H1 (cell line): ENCODE measurements at regions of chr17 and their contacts with region 1.

Region 1: GRCh38 chr17:57243171-57243948 is 13.0 kb upstream of the MSI2 start:
- DNase-seq: peak; percentile 47 to 92
- H3K4me3 ChIP-seq: no peak overlapping the region
- H3K27ac ChIP-seq: no peak overlapping the region
- H3K4me1 ChIP-seq: peaks cover 0 to 3% (median under 1%) of the 10 kb centered on the region in 4 experiments; a peak in 2 of 7 replicates
- H3K27me3 ChIP-seq: no peaks in the 10 kb centered on the region
- CTCF ChIP-seq: peak; percentile 100
- EP300 ChIP-seq: no peak
- POLR2A ChIP-seq: no peak
- RAD21 ChIP-seq: peak; percentile 95 to 98

Region 2: DNA sequence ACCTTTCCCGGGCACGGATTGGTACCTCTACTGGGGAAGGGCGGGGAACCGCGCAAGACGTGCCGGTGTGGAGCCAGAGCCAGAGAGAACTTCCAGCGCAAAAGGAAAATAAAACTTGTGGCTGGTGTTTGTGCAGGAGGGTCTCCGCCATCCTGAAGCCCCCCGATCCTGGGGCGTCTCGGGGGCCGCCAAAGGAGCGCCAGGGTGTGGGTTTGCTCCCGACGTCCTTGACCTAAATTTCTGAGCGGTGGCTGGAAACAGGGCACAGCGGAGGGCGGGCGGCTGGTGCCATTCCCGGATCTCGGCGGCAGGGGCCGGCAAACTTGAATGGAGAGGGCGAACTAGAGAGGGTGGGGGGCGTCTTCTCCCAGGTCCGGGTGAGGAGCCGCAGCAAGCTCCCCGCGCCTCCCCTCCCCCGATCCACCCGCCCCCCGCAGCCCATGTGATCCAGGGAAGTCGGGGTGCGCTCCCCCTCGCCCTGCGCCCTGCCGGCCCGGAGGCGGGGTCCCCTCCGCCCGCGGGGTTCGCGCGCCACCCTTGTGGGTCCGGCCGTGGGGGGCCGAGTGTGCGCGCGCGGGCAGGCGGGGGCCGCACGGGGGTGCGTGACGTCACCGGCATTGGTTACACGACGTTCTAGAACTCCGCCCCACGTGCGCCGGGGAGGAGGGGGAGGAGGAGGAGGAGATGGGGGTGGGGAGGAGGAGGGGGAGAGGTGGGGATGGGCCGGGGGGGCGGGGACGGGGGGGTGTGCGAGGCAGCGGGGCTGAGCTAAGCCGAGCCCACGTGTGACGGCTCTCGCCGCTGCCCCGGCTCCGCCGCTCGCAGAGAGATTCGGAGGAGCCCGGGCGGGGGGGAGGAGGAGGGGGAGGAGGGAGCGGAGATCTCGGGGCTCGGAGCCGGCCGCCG is 12.7 kb after region 1 on chr17 and contains the start of gene MSI2:
- CTCF ChIA-PET with region 1: interaction called, 40 read pairs
- POLR2A ChIA-PET with region 1: interaction called, 4 read pairs
- DNase-seq: peak in 1 of 2 experiments; percentile 87
- H3K4me3 ChIP-seq: peak within 1 kb of the TSS; percentile 72 to 94 (median 74)
- H3K27ac ChIP-seq: peak within 1 kb of the TSS; percentile 70; the same call in 1 of the 2 replicates
- H3K4me1 ChIP-seq: peaks cover 4 to 30% (median 6%) of the 10 kb centered on the region in 4 experiments; a peak in 6 of 7 replicates
- H3K27me3 ChIP-seq: peaks cover 2 to 10% (median 8%) of the 10 kb centered on the region in 4 experiments; a peak in 6 of 7 replicates
- CTCF ChIP-seq: peak in 1 of 3 experiments; percentile 10; a peak in 1 of 4 replicates
- EP300 ChIP-seq: no peak
- POLR2A ChIP-seq: no peak
- RAD21 ChIP-seq: peak in 1 of 2 experiments; percentile 8; a peak in 1 of 4 replicates
- total RNA-seq, gene MSI2: 73.1 and 80.6 TPM in 2 replicates

Region 3: GRCh38 chr17:57279432-57279831 is 36.1 kb after region 1 on chr17:
- CTCF ChIA-PET with region 1: interaction called, 20 read pairs
- POLR2A ChIA-PET with region 1: no interaction called
- DNase-seq: no peak
- H3K4me3 ChIP-seq: no peak overlapping the region
- H3K27ac ChIP-seq: no peak overlapping the region
- H3K4me1 ChIP-seq: peaks cover 2 to 13% (median 4%) of the 10 kb centered on the region in 4 experiments; a peak in 4 of 7 replicates
- H3K27me3 ChIP-seq: no peaks in the 10 kb centered on the region
- CTCF ChIP-seq: no peak
- EP300 ChIP-seq: no peak
- POLR2A ChIP-seq: no peak
- RAD21 ChIP-seq: no peak

Region 4: DNA sequence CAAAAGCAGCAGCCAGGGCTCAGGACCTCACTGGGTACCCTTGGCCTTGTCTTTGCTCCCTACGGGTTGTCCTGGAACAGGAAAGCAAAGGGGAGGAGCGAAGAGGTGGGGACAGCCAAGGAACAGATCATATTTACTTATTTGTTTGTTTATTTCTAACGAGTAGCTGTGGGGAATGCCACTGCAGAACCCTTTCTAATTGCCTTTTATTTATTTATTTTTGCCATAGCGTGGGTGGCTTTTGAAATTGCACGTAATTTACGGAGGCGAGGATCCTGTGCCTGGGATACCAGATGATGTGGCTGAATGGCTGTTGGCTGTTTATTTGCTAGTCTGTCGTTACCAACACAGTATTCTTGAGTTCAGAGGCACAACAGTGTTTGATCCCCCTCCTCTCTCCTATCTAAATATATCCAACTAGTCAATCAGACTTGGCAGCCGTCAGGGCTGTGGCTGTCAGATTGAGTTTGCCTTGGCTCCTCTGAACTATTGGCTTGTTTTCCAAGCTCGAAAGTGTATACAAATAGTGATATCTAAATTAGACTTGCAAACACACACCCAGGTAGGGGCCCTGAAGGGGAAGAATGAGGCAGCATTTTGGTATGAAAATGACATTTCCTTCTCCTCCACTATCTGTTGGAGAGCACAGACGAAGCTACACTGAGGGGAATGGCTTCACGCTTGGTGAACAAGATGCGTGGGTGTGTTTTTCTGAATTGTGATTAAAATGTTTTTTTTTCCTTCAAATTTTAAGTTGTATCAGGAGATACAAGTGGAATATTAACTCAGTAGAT is 123.4 kb after region 1 on chr17:
- CTCF ChIA-PET with region 1: interaction called, 10 read pairs
- POLR2A ChIA-PET with region 1: no interaction called
- DNase-seq: no peak
- H3K4me3 ChIP-seq: no peak overlapping the region
- H3K27ac ChIP-seq: no peak overlapping the region
- H3K4me1 ChIP-seq: peaks cover 2 to 19% (median 16%) of the 10 kb centered on the region in 4 experiments; a peak in 6 of 7 replicates
- H3K27me3 ChIP-seq: no peaks in the 10 kb centered on the region
- CTCF ChIP-seq: no peak
- EP300 ChIP-seq: no peak
- POLR2A ChIP-seq: no peak
- RAD21 ChIP-seq: no peak

Region 5: GRCh38 chr17:57422574-57423164 is 179.3 kb after region 1 on chr17:
- CTCF ChIA-PET with region 1: interaction called, 18 read pairs
- POLR2A ChIA-PET with region 1: no interaction called
- DNase-seq: no peak
- H3K4me3 ChIP-seq: no peak overlapping the region
- H3K27ac ChIP-seq: no peak overlapping the region
- H3K4me1 ChIP-seq: peaks cover 6 to 17% (median 11%) of the 10 kb centered on the region in 4 experiments; a peak in 6 of 7 replicates
- H3K27me3 ChIP-seq: no peaks in the 10 kb centered on the region
- CTCF ChIP-seq: no peak
- EP300 ChIP-seq: no peak
- POLR2A ChIP-seq: no peak
- RAD21 ChIP-seq: no peak

Region 6: GRCh38 chr17:57552114-57552624 is 308.8 kb after region 1 on chr17:
- CTCF ChIA-PET with region 1: interaction called, 14 read pairs
- POLR2A ChIA-PET with region 1: no interaction called
- DNase-seq: peak in 1 of 2 experiments; percentile 82
- H3K4me3 ChIP-seq: no peak overlapping the region
- H3K27ac ChIP-seq: peak overlapping the region; percentile 29; the same call in 1 of the 2 replicates
- H3K4me1 ChIP-seq: peaks cover 8 to 46% (median 25%) of the 10 kb centered on the region in 4 experiments
- H3K27me3 ChIP-seq: no peaks in the 10 kb centered on the region
- CTCF ChIP-seq: peak; percentile 76 to 98 (median 87)
- EP300 ChIP-seq: no peak
- POLR2A ChIP-seq: no peak
- RAD21 ChIP-seq: peak; percentile 56 to 69

Region 7: DNA sequence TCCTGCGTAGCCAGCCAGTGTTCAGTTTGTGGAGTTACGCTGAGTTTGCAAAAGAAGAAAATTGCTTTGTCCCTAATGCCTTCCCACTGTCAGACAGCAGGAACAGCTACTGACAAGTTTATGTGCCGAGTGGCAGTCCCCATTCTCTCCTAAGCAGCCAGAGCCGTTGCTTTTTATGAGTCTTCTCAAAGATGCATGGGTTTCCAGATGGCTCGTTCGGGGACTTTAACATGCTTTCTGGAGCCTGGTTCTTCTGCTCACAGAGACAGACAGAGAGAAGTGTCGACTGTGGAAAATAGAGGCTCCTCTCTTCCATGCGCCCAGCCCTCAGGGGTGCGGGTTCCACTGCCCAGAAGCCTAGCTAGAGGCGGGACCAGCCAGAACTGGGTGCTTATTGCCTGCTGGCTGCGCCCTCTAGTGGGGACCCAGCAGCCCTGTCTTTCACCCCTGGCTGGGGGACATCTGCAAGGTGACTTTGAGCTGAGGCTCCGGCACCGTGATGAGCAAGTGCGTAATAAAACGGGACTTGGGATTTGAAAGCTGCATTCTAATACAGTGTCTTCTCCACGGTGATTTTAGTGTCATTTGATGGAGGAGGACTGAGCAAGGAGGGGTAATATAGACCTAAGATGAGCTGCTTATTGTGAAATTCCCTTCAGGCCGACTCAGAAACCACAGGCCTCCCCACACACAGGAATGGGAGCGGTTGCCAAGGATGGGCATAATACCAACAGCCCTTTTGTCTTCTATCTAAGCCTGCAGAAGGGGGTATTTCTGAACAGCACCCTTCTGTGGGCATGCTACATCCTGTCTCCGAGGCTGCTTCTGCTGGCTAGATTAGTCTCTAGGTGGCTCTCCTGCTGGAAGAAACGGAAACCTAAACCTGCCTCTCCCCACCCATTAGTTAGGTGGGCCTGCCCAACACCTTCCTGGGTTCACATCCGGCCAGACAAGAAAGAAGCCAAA is 428.6 kb after region 1 on chr17:
- CTCF ChIA-PET with region 1: interaction called, 10 read pairs
- POLR2A ChIA-PET with region 1: no interaction called
- DNase-seq: peak; percentile 81 to 88
- H3K4me3 ChIP-seq: no peak overlapping the region
- H3K27ac ChIP-seq: no peak overlapping the region
- H3K4me1 ChIP-seq: no peaks in the 10 kb centered on the region; a peak in 1 of 7 replicates
- H3K27me3 ChIP-seq: no peaks in the 10 kb centered on the region
- CTCF ChIP-seq: peak; percentile 97 to 99 (median 98)
- EP300 ChIP-seq: no peak
- POLR2A ChIP-seq: no peak
- RAD21 ChIP-seq: peak; percentile 93 to 97